ENCODE measurements at regions of chr4 and their contacts with region 1.

Region 1: DNA sequence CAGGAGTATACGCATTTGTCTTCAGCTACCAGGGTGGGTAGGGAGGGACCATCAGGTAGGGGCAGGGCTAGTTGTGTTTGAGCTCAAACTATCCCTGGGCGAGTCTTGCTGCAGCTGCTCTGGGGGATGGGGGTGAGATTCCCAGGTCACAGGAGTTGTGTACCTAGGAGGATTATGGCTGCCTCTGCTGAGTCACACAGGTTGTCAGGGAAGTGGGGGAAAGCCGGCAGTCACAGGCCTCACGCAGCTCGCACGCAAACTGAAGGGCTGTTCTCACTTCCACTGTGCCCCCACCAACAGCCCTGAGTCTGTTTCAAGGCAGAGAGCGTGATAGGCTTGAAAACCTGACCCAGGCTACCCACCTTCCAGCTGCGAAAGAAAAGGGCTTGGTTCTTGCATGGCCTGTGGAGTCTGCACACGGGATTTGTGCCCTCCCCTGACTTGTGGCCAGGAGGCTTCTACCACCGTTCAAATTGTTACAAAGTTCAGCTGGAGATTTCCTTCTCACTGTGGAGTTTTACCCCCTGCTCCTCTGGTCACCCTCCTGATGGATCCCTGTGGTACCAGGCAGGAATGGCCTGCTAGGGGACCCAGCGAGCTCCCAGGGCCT is 63.8 kb downstream of the ARFIP1 start:
- DNase-seq: no peak
- H3K4me3 ChIP-seq: no peak overlapping the region
- H3K27ac ChIP-seq: no peak overlapping the region
- H3K4me1 ChIP-seq: no peaks in the 10 kb centered on the region
- H3K27me3 ChIP-seq: no peaks in the 10 kb centered on the region

Region 2: GRCh38 chr4:153095448-153096204 is 252.0 kb after region 1 on chr4:
- in situ Hi-C with region 1: loop called (anchors 10 kb)
- DNase-seq: no peak
- H3K4me3 ChIP-seq: no peak overlapping the region
- H3K27ac ChIP-seq: no peak overlapping the region
- H3K4me1 ChIP-seq: no peaks in the 10 kb centered on the region
- H3K27me3 ChIP-seq: peaks cover 10% of the 10 kb centered on the region

Region 3: GRCh38 chr4:153318696-153319320 is 475.2 kb after region 1 on chr4:
- in situ Hi-C with region 1: loop called (anchors 25 kb)
- DNase-seq: peak; percentile 67
- H3K4me3 ChIP-seq: no peak overlapping the region
- H3K27ac ChIP-seq: no peak overlapping the region
- H3K4me1 ChIP-seq: no peaks in the 10 kb centered on the region
- H3K27me3 ChIP-seq: no peaks in the 10 kb centered on the region

Region 4: GRCh38 chr4:153362184-153362583 is 518.6 kb after region 1 on chr4:
- in situ Hi-C with region 1: no loop called
- DNase-seq: no peak
- H3K4me3 ChIP-seq: no peak overlapping the region
- H3K27ac ChIP-seq: no peak overlapping the region
- H3K4me1 ChIP-seq: no peaks in the 10 kb centered on the region
- H3K27me3 ChIP-seq: no peaks in the 10 kb centered on the region

Region 5: GRCh38 chr4:153464068-153464467 is 620.5 kb after region 1 on chr4:
- in situ Hi-C with region 1: no loop called
- DNase-seq: no peak
- H3K4me3 ChIP-seq: no peak overlapping the region
- H3K27ac ChIP-seq: no peak overlapping the region
- H3K4me1 ChIP-seq: peaks cover 16% of the 10 kb centered on the region; the same call in 1 of the 2 replicates
- H3K27me3 ChIP-seq: no peaks in the 10 kb centered on the region

Measured in GM23248 (cell line).